Dendritic cell treated with granulocyte-macrophage colony-stimulating factor and Interleukin-4, amounts not matched to agents 40 ng/mL and 50 ng/mL, for 4 days (primary cell): ENCODE measurements at regions of chr2 and their contacts with region 1.

Region 1: DNA sequence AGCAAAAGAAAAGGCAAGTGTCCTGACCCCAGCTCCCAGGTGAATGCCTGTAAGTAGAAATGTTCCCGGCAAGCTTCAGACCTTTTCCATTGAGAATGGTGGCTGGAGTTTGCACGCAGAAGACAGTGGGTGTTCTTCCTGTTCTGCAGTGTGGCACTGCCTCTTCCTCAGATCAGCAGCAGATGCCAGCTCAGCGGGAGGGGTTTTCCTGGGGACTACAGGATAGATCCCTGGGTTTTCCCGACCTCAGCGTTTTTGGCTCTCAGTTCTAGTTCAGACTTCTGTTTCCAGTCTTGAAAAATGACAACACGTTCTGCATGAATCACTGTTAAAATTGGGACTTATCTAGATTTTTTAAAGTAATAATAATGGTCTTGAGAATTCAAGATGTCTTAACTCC is 39.2 kb downstream of the GRHL1 start:
- H3K4me3 Mint-ChIP-seq: no peak overlapping the region
- H3K27ac Mint-ChIP-seq: peak overlapping the region; percentile 86
- H3K4me1 Mint-ChIP-seq: peaks cover 51% of the 10 kb centered on the region
- H3K27me3 Mint-ChIP-seq: no peaks in the 10 kb centered on the region

Region 2: DNA sequence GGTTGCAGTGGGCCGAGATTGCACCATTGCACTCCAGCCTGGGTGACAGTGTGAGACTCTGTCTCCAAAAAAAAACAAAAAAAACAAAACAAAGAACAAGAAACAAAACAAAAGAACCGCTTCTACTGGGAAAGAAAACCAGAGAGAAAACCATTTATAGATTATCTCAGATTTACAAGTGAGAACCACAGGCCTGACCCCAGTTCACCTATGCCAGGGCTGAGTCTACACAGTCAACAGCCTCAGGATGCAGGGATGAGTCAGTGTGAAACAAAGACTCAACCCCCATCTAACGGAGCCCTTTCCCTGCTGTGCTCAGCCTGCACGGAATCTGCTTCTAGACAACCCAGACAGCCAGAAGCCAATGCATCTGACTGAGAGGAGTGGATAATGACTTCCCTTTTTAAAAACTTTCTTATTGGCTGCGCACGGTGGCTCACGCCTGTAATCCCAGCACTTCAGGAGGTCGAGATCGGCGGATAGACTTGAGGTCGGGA is 334.4 kb before region 1 on chr2:
- intact Hi-C with region 1: no loop called
- H3K4me3 Mint-ChIP-seq: no peak overlapping the region
- H3K27ac Mint-ChIP-seq: no peak overlapping the region
- H3K4me1 Mint-ChIP-seq: peaks cover 9% of the 10 kb centered on the region
- H3K27me3 Mint-ChIP-seq: no peaks in the 10 kb centered on the region

Region 3: DNA sequence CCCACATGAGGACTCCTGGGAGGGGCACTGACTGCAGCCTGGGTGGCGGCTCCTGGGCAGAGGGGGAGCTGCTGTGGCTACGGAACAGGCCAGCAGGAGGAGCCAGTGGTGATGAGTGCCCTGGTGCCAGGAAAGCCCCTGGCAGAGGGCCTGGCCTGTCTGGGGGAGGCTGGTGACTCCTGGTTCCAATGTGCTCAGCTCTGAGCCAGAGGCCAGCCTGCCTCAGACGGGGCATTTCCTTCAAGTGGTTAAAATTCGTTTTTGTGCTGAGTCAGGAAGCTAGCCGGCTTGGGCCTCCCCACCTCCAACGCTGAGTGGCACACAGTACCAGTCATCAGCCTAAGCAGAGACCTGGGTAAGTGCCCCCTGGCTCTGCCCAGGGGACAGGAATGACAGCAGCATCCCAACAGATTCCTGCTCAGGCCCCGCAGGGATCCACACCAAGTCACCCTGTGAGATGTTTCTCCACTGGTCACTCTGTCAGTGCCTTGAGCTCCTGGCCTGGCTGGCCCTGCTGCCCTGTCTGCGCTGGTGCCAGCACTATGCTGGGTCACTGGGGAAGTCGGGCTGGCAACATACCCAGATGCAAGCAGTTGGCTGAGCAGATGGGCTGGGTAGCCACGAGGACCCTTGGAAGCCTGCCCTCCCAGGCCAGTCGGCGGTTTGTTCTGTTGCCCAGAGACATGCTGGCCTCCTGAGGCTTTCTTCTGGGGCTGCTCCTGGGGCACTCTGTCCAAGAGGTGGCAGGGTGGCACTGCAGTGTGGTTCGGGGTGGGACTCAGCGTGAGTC is 45.6 kb after region 1 on chr2:
- intact Hi-C with region 1: loop called (anchors 2 kb)
- H3K4me3 Mint-ChIP-seq: peak overlapping the region; percentile 56
- H3K27ac Mint-ChIP-seq: peak overlapping the region; percentile 99
- H3K4me1 Mint-ChIP-seq: peaks cover 94% of the 10 kb centered on the region
- H3K27me3 Mint-ChIP-seq: peaks cover 9% of the 10 kb centered on the region

Region 4: GRCh38 chr2:10414000-10414451 is 423.3 kb after region 1 on chr2:
- intact Hi-C with region 1: no loop called
- H3K4me3 Mint-ChIP-seq: no peak overlapping the region
- H3K27ac Mint-ChIP-seq: no peak overlapping the region
- H3K4me1 Mint-ChIP-seq: peaks cover 37% of the 10 kb centered on the region
- H3K27me3 Mint-ChIP-seq: no peaks in the 10 kb centered on the region